Activated CD8-positive, alpha-beta T cell treated with anti-CD3 and anti-CD28 coated beads, Interleukin-2, amount 10 ng/mL, durations not matched to agents 7 days and 5 days (primary cell): ENCODE measurements at regions of chr4 and their contacts with region 1.

Region 1: GRCh38 chr4:148056869-148057268 is 325.0 kb downstream of the ARHGAP10 start:
- DNase-seq: peak; percentile 87
- ATAC-seq: peak; percentile 72
- H3K4me3 Mint-ChIP-seq: peak overlapping the region; percentile 40
- H3K27ac Mint-ChIP-seq: peak overlapping the region; percentile 59
- H3K4me1 Mint-ChIP-seq: peaks cover 91% of the 10 kb centered on the region
- H3K27me3 Mint-ChIP-seq: no peaks in the 10 kb centered on the region

Region 2: DNA sequence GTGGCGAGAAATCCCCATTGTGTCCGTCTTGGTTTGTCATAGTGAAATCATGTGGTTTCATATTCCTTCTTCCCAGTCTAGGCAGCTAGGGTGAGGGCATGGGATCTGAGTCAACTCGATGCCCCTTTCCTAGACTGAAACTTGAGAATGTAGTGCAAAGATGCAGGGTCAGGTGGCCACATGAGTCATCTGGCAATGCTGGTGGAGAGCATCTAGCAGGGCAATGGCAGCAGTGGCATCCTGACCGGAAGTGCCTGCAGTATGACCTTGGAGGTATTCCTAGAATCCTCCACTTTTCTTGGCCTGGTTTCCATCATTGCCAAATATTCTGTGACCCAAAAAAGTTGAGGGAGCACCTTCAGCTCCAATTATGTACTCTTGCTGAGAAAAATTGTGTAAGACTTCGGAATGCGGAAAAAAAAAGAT is 478.8 kb before region 1 on chr4:
- CTCF ChIA-PET with region 1: no interaction called
- POLR2A ChIA-PET with region 1: no interaction called
- DNase-seq: no peak
- ATAC-seq: no peak
- H3K4me3 Mint-ChIP-seq: no peak overlapping the region
- H3K27ac Mint-ChIP-seq: no peak overlapping the region
- H3K4me1 Mint-ChIP-seq: peaks cover 10% of the 10 kb centered on the region
- H3K27me3 Mint-ChIP-seq: no peaks in the 10 kb centered on the region

Region 3: DNA sequence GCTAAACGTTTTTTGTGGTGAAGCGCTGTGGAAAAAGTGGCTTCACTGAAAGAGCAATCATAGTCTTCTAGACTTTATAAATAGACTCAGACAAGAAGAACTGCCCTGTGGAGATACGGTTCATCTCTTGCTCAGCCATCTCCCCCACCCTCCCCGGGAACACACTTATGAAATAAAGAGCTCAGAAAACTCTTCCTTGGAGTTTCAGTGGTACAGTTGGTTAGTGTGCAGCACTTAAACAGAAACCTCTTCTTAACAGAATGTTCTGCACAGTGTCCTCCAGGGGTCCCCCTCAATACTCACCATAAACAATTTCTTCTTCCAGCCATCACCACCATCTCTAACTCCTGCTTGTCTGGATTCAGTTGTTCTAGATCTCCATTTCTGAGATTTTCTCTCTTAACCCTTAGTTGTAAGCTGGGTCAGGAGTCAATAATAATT is 11.9 kb before region 1 on chr4:
- CTCF ChIA-PET with region 1: interaction called, 18 read pairs
- POLR2A ChIA-PET with region 1: no interaction called
- DNase-seq: no peak
- ATAC-seq: peak; percentile 79
- H3K4me3 Mint-ChIP-seq: no peak overlapping the region
- H3K27ac Mint-ChIP-seq: no peak overlapping the region
- H3K4me1 Mint-ChIP-seq: peaks cover 30% of the 10 kb centered on the region
- H3K27me3 Mint-ChIP-seq: no peaks in the 10 kb centered on the region

Region 4: GRCh38 chr4:148126825-148127224 is 70.0 kb after region 1 on chr4:
- CTCF ChIA-PET with region 1: no interaction called
- POLR2A ChIA-PET with region 1: no interaction called
- DNase-seq: no peak
- ATAC-seq: no peak
- H3K4me3 Mint-ChIP-seq: no peak overlapping the region
- H3K27ac Mint-ChIP-seq: no peak overlapping the region
- H3K4me1 Mint-ChIP-seq: no peaks in the 10 kb centered on the region
- H3K27me3 Mint-ChIP-seq: no peaks in the 10 kb centered on the region

Region 5: GRCh38 chr4:148196164-148196563 is 139.3 kb after region 1 on chr4:
- CTCF ChIA-PET with region 1: no interaction called
- POLR2A ChIA-PET with region 1: no interaction called
- DNase-seq: no peak
- ATAC-seq: peak; percentile 49
- H3K4me3 Mint-ChIP-seq: no peak overlapping the region
- H3K27ac Mint-ChIP-seq: no peak overlapping the region
- H3K4me1 Mint-ChIP-seq: peaks cover 6% of the 10 kb centered on the region
- H3K27me3 Mint-ChIP-seq: no peaks in the 10 kb centered on the region

Region 6: GRCh38 chr4:148366251-148366650 is 309.4 kb after region 1 on chr4:
- CTCF ChIA-PET with region 1: no interaction called
- POLR2A ChIA-PET with region 1: no interaction called
- DNase-seq: no peak
- ATAC-seq: no peak
- H3K4me3 Mint-ChIP-seq: no peak overlapping the region
- H3K27ac Mint-ChIP-seq: no peak overlapping the region
- H3K4me1 Mint-ChIP-seq: no peaks in the 10 kb centered on the region
- H3K27me3 Mint-ChIP-seq: no peaks in the 10 kb centered on the region

Region 7: GRCh38 chr4:148441986-148442831 is 385.3 kb after region 1 on chr4 and contains the start of gene NR3C2:
- CTCF ChIA-PET with region 1: interaction called, 10 read pairs
- POLR2A ChIA-PET with region 1: interaction called, 11 read pairs
- DNase-seq: peak; percentile 98
- ATAC-seq: peak; percentile 90
- H3K4me3 Mint-ChIP-seq: peak within 1 kb of the TSS; percentile 97
- H3K27ac Mint-ChIP-seq: peak within 1 kb of the TSS; percentile 95
- H3K4me1 Mint-ChIP-seq: peaks cover 26% of the 10 kb centered on the region
- H3K27me3 Mint-ChIP-seq: peaks cover 15% of the 10 kb centered on the region
- total RNA-seq, gene NR3C2: 5.3 to 5.7 TPM